OCI-LY7 (cell line): ENCODE measurements at regions of chr3 and their contacts with region 1.

Region 1: DNA sequence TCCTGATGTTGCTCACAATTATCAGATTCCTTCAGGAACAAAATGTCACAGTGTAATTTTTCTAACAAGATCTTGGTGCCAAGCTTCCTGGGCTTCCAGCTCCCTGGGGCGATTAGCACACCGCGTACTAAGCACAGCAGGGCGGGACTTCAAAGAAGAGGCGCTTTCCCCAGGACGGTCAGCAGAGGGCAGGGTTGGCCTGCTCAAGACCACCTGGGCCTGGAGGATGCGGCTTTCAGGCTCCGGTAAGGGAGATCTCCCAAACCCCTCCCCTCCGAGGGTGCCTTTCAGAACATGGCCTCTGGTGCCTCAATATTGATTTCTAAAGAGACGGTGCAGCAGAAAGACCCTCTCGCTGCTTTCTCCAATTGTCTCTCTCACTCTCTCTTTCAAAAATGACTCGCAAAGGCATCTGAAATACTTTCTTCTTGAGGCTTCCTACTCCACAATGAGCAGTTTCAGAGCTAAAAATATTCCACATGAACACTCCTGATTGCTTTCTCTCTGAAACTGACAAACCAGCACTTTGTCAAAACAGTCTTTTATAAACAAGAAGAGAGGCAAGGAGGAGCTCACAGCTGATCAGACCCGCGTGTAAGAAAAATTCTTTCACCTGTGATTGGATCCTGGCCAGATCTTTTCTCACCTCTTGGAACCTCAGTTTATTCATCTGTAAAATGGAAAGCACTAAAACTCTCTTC is 154.0 kb downstream of the ADAMTS9 start:
- DNase-seq: peak; percentile 38
- H3K4me3 ChIP-seq: no peak overlapping the region
- H3K27ac ChIP-seq: no peak overlapping the region
- H3K4me1 ChIP-seq: no peaks in the 10 kb centered on the region
- CTCF ChIP-seq: peak; percentile 77

Region 2: DNA sequence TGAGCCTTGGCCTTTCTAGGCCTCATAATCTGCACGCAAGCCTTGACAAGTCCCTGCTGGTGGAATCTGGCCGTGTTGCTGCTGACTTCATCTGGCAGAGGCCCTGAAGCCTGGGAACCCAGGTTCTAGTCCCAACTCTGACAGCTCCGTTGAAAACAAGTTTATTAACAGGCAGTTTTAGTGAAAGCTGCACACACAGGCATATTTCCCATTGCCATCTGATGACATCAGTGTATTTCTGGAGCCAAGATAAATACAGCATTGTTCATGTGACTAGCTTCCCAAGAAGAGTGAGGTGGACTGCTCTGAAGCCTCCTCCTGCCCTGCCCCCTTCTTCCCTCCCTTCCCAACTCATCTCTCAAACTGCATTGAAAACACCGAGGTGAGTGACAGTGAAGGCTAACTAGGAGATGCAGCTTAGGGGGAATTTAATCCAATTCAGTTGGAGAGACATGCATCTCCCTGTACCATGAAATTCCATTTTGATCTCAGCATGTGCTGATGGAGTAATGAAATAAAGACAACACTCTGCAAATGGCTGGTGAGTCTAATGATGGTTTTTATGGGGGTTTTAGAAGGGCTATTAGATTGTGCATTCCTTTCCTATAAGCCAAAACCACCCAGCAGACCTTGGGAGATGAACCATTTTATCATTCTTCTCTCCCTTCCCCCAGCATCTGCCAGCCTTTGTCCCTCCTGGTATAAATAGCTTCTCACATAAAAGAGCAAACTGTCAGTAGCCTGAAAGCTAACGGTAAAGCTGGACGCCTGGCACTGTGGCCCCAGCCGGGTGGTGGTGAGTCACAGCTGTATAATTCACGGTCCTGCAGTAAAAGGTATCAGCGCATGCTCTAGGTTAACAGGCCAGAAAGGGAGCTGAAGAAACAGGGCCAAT is 346.5 kb before region 1 on chr3:
- CTCF ChIA-PET with region 1: no interaction called
- POLR2A ChIA-PET with region 1: no interaction called
- intact Hi-C with region 1: no loop called
- DNase-seq: no peak
- H3K4me3 ChIP-seq: no peak overlapping the region
- H3K27ac ChIP-seq: no peak overlapping the region
- H3K4me1 ChIP-seq: no peaks in the 10 kb centered on the region
- CTCF ChIP-seq: no peak

Region 3: DNA sequence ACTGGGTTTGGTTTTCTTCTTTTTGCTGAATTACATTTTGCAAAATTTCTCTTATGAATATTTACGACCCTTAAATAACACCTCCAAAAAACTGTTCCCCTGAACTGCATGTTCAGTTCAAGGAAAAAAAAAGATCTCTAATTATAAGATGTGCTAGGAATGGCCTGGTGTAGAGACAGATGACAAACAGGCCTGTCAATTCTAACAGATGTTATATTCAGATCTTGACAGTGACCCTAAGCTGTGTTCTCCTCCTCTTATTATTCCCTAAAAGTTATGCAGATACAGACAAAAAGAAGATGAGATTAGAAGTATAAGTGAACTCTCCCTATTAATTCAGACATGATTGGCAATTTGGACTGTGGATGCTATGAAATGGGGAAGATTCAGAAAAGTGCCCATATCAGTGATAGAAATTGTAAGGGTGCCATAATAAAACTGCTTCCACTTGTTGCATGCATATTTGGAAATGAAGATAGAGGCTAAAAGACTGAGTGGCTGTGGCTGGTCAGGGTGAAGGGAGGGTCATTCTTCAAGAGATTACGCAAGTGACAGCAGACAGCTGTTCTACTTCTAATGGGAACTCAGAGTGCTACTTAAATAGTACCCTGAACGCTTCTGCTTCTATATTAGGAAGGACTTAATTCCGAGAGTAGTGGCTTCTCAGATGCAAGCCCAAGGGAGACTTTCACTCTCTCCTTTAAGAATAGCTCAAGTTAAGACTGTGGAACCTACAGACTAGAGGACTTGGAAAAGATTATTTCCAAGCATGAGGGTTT is 78.5 kb after region 1 on chr3:
- CTCF ChIA-PET with region 1: no interaction called
- POLR2A ChIA-PET with region 1: no interaction called
- intact Hi-C with region 1: no loop called
- DNase-seq: no peak
- H3K4me3 ChIP-seq: no peak overlapping the region
- H3K27ac ChIP-seq: no peak overlapping the region
- H3K4me1 ChIP-seq: no peaks in the 10 kb centered on the region
- CTCF ChIP-seq: no peak

Region 4: GRCh38 chr3:64728428-64728827 is 194.7 kb after region 1 on chr3:
- CTCF ChIA-PET with region 1: no interaction called
- POLR2A ChIA-PET with region 1: no interaction called
- intact Hi-C with region 1: no loop called
- DNase-seq: no peak
- H3K4me3 ChIP-seq: no peak overlapping the region
- H3K27ac ChIP-seq: no peak overlapping the region
- H3K4me1 ChIP-seq: no peaks in the 10 kb centered on the region
- CTCF ChIP-seq: no peak

Region 5: DNA sequence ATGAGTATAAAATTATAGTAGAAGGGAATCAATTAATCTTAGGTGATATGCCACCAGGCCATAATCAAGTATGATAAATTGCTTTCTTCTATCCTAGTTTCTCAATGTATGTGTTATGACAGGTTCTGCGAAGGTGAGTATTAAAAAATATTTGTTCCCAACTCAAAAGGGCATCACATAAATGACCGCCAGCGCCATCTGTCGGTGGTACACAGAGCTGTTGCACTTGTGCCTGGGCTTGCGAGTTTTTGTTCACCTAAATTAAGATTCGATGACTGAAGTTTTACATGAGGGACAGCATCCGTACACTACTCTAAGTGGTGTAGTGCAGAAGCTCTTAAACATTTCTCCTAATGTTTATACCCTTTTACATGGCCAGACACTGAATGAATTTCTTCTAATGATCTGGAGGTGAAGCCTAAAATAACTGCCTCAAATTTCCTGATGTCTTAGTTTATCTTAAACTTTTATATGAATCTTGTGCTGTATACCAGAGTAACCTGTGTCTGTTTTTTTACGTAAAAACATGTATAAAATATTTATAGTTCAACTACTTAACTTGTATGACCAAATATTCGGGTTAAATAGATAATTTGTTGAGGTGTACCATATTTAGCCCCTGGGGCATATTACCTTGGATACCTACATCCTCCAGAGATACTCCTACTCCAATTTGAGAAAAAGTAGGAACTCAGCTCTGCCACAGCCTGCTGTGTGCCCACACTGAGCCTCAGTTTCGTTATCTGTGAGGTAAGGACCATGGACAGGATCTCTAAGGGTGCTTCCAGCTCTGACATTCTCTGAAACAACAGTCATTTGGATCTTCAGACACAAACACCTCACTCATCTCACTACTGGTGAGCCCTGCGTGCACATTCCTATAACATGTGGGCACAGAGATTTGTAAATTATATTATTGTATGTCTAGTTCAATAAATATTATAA is 1139.4 kb after region 1 on chr3:
- CTCF ChIA-PET with region 1: no interaction called
- POLR2A ChIA-PET with region 1: no interaction called
- intact Hi-C with region 1: loop called (anchors 5 kb)
- DNase-seq: peak; percentile 50
- H3K4me3 ChIP-seq: no peak overlapping the region
- H3K27ac ChIP-seq: no peak overlapping the region
- H3K4me1 ChIP-seq: no peaks in the 10 kb centered on the region
- CTCF ChIP-seq: peak; percentile 90